ENCODE measurements at regions of chr5 and their contacts with region 1.

Region 1: DNA sequence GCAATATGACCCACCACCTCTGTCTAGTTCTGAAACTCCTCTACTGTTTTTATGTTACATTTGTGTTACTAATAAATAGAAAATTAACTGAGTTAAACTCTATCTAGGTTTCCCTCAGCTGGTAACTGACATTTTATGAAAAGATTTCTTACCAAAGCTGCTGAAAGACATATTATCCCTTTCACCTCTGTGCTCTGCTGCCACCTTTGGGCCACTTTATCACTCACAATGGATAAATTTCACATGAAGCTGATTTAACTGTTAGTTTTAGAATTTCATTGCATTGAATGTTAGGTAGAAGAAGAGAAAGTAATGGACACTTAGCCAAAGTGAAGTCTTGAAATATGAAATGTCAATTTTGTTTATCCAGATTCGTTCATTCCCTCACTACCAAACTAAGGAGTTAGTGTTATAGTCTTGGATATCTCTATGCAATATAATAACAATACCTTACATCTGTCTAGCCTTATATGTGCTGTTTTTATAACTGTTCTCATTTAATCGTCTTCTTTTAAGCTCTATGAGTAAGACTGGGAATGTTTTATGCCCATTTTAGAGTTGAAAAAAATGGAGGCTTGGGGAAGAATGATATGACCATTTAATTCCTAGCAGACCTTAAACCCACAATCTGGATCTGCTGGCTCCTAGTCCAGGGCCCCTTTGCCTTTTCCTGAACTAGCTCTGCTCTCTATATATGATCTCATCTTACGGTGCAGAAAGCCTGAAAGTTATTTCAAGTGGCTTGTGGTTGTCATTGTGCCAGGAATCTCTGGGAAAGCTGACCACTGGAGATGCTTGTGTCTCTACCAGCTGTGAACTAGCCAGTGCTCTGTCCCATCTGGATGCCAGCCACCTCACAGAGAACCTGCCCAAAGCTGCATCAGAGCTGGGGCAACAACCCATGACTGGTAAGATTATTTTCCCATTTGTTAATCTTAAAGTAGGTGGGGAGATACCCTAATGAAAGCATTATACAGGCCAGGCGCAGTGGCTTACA is 97.1 kb downstream of the GOLPH3 start:
- DNase-seq: peak in 1 of 2 experiments; percentile 49
- H3K4me3 ChIP-seq: no peak overlapping the region
- H3K4me3 Mint-ChIP-seq: no peak overlapping the region
- H3K27ac Mint-ChIP-seq: no peak overlapping the region
- H3K4me1 ChIP-seq: no peaks in the 10 kb centered on the region
- H3K4me1 Mint-ChIP-seq: no peaks in the 10 kb centered on the region
- H3K27me3 ChIP-seq: no peaks in the 10 kb centered on the region
- H3K27me3 Mint-ChIP-seq: no peaks in the 10 kb centered on the region
- CTCF ChIP-seq: peak; percentile 74 to 75

Region 2: DNA sequence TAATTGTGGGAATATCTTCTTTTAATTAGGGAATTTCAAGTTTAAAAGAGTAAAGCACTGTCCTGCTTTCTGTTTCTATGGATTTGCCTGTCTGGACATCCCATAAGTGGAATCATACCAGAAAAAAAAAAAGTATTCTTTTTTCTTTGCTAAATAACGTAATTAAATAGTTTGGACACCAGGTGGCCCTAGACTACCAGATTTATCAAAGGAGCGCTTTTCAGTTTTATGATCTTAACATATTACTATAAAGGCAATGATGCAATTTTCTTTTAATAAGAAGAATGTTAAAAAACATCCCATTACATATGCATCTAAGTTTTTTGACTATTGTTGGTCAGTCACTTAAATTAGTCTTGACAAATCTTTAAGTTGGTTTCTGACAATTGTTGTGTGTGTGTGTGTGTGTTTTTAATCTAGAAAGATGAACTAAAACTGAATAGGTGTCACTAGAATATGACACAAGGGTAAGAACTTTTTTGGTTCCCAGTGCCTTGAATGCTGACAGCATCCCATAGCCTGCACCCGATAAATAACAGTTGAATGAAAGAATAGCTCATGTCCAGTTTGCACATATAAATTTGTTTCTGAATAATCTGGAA is 495.4 kb before region 1 on chr5:
- CTCF ChIA-PET with region 1: no interaction called
- POLR2A ChIA-PET with region 1: no interaction called
- intact Hi-C with region 1: loop called (anchors 1 kb)
- DNase-seq: peak in 1 of 2 experiments; percentile 22
- H3K4me3 ChIP-seq: no peak overlapping the region
- H3K4me3 Mint-ChIP-seq: no peak overlapping the region
- H3K27ac Mint-ChIP-seq: no peak overlapping the region
- H3K4me1 ChIP-seq: no peaks in the 10 kb centered on the region
- H3K4me1 Mint-ChIP-seq: no peaks in the 10 kb centered on the region
- H3K27me3 ChIP-seq: no peaks in the 10 kb centered on the region; the same call in 1 of the 2 replicates
- H3K27me3 Mint-ChIP-seq: peaks cover 23% of the 10 kb centered on the region
- CTCF ChIP-seq: peak; percentile 15 to 74

Region 3: GRCh38 chr5:31825518-31826068 is 251.4 kb before region 1 on chr5:
- CTCF ChIA-PET with region 1: interaction called, 9 read pairs
- POLR2A ChIA-PET with region 1: no interaction called
- intact Hi-C with region 1: loop called (anchors 1 kb)
- DNase-seq: peak; percentile 43 to 55
- H3K4me3 ChIP-seq: no peak overlapping the region
- H3K4me3 Mint-ChIP-seq: no peak overlapping the region
- H3K27ac Mint-ChIP-seq: no peak overlapping the region
- H3K4me1 ChIP-seq: no peaks in the 10 kb centered on the region
- H3K4me1 Mint-ChIP-seq: no peaks in the 10 kb centered on the region
- H3K27me3 ChIP-seq: no peaks in the 10 kb centered on the region
- H3K27me3 Mint-ChIP-seq: no peaks in the 10 kb centered on the region
- CTCF ChIP-seq: peak; percentile 55 to 66

Region 4: DNA sequence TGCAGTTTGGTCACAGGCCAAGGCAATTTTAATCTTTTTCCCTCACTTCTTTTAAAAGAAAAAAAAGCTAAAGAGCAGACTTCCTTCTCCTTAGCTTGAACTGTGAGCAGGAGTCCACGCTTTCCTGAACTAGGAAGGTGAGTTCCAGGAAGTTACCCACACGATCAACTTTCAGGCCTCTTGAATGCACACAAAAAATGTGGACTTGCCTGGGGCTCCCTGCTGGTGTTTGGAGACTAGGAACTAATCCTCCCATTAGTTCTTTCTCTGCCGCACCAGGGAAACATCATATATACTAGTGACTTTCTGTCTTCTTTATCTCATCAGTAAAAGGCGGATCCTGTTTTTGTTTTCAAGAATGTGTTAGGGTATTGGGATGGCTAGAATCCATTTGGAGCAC is 142.8 kb before region 1 on chr5:
- CTCF ChIA-PET with region 1: interaction called, 13 read pairs
- POLR2A ChIA-PET with region 1: no interaction called
- intact Hi-C with region 1: loop called (anchors 1 kb)
- DNase-seq: no peak
- H3K4me3 ChIP-seq: no peak overlapping the region
- H3K4me3 Mint-ChIP-seq: no peak overlapping the region
- H3K27ac Mint-ChIP-seq: no peak overlapping the region
- H3K4me1 ChIP-seq: no peaks in the 10 kb centered on the region
- H3K4me1 Mint-ChIP-seq: no peaks in the 10 kb centered on the region
- H3K27me3 ChIP-seq: no peaks in the 10 kb centered on the region
- H3K27me3 Mint-ChIP-seq: peaks cover 3% of the 10 kb centered on the region
- CTCF ChIP-seq: no peak

Measured in Caco-2 (cell line).